ENCODE measurements at regions of chr12 and their contacts with region 1.

Region 1: GRCh38 chr12:6959058-6959804 is 8.1 kb downstream of the PTPN6 start:
- DNase-seq: peak; percentile 67
- H3K4me3 Mint-ChIP-seq: peak overlapping the region; percentile 91
- H3K27ac Mint-ChIP-seq: peak overlapping the region; percentile 96
- H3K4me1 Mint-ChIP-seq: peaks cover 72% of the 10 kb centered on the region
- H3K27me3 Mint-ChIP-seq: no peaks in the 10 kb centered on the region

Region 2: DNA sequence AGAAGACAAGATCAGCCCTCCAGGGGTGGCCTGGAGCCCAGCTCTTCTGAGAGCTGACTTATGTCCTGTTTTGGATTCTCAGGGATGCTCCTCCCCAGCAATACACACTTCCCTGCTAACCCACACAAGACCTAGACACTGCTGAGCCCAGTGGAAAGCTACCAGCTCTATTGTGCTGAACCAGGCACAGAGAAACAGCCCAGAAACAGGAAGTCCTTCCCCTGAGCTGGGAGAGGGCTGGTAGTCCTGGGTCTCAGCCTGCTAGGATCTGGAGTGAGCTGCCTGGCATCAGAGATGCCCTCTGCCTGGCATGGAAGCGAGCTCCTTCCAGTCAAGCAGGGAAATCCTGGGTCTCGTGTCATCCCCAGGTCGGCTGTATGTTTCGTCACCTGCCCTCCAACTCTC is 188.1 kb before region 1 on chr12:
- intact Hi-C with region 1: loop called (anchors 5 kb)
- DNase-seq: no peak
- H3K4me3 Mint-ChIP-seq: peak overlapping the region; percentile 82
- H3K27ac Mint-ChIP-seq: peak overlapping the region; percentile 86
- H3K4me1 Mint-ChIP-seq: peaks cover 77% of the 10 kb centered on the region
- H3K27me3 Mint-ChIP-seq: no peaks in the 10 kb centered on the region

Measured in activated T-helper 1 cell treated with anti-CD3 and anti-CD28 coated beads, Interleukin-12 subunit alpha, Interleukin-12 subunit beta, Interleukin-2, Interleukin-4 antibody, amounts not matched to agents 30 ng/mL and 10 ng/mL and 1 ng/mL, durations not matched to agents 14 hours and 24 hours and 36 hours (primary cell).